ENCODE measurements at regions of chrX and their contacts with region 1.

Region 1: GRCh38 chrX:24464836-24465531 is at the start of gene PDK3:
- DNase-seq: peak; percentile 90
- H3K4me3 ChIP-seq: peak within 1 kb of the TSS; percentile 92
- H3K27ac ChIP-seq: peak within 1 kb of the TSS; percentile 85
- H3K4me1 ChIP-seq: peaks cover 54% of the 10 kb centered on the region
- CTCF ChIP-seq: no peak
- total RNA-seq, gene PDK3: 22.6 and 24.5 TPM in 2 replicates

Region 2: GRCh38 chrX:23861215-23861896 is 603.6 kb before region 1 on chrX:
- CTCF ChIA-PET with region 1: no interaction called
- POLR2A ChIA-PET with region 1: no interaction called
- intact Hi-C with region 1: no loop called
- DNase-seq: no peak
- H3K4me3 ChIP-seq: no peak overlapping the region
- H3K27ac ChIP-seq: no peak overlapping the region
- H3K4me1 ChIP-seq: no peaks in the 10 kb centered on the region
- CTCF ChIP-seq: no peak

Region 3: DNA sequence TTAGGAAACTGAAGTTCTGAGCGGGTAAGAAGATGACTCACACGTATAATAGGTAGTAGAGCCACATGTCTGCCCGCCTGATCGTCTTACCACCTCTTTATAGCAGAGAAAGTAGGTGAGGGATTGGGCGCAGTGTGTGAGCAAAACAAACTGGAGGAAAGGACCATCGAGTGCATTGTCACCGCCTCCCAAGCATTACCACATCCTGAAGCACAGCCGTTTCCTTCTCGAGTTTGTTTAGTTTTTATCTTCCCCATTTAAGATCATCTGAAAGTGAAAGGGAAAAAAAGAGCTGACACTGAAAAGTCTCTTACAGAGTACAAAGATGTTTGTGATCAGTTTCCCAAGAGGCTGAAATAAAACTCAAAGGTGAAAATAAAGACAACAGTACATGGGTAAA is 14.9 kb after region 1 on chrX:
- CTCF ChIA-PET with region 1: interaction called, 3 read pairs
- POLR2A ChIA-PET with region 1: interaction called, 29 read pairs
- intact Hi-C with region 1: loop called (anchors 1 kb)
- DNase-seq: peak; percentile 69
- H3K4me3 ChIP-seq: peak overlapping the region; percentile 61
- H3K27ac ChIP-seq: peak overlapping the region; percentile 80
- H3K4me1 ChIP-seq: peaks cover 50% of the 10 kb centered on the region
- CTCF ChIP-seq: no peak

Region 4: DNA sequence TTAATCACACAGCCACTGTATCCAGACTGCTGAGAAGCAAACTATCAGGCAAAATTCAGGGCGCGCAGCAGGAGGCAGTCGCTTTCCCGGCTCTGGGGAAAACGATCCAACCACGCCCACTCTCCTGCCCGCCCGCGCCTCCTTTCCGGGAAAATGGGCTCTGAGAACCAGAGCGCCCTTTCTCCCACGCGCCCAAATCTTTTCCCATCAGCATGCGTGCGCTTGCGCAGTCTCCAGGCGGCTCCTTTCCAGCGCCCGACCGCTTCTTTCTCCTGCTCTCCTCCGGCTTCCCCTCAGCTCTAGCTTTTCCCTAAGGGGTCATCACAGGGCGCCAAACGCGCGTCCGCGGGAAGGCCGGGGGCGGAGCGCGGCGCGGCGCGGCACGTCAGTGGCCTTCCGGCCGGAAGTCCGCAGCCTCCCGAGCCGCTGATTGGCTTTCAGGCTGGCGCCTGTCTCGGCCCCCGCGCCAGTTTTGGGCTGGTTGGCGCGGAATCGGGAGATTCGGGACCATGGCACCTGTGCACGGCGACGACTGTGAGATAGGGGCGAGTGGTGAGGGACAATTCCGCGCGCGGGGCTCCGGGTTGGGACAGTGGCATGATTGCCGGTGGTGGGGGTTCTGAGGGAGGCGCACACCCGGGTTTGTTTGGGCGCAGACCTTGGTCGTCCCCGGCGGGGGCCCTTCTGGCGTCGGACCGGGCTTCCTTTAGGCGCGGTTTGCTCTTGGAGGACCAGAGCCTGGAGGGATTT is 228.6 kb after region 1 on chrX and contains the start of gene POLA1:
- CTCF ChIA-PET with region 1: no interaction called
- POLR2A ChIA-PET with region 1: no interaction called
- intact Hi-C with region 1: loop called (anchors 10 kb)
- DNase-seq: peak; percentile 91
- H3K4me3 ChIP-seq: peak within 1 kb of the TSS; percentile 94
- H3K27ac ChIP-seq: peak within 1 kb of the TSS; percentile 63
- H3K4me1 ChIP-seq: peaks cover 32% of the 10 kb centered on the region
- CTCF ChIP-seq: no peak
- total RNA-seq, gene POLA1: 58.0 and 60.1 TPM in 2 replicates